MCF 10A (cell line): ENCODE measurements at regions of chr2 and their contacts with region 1.

Region 1: DNA sequence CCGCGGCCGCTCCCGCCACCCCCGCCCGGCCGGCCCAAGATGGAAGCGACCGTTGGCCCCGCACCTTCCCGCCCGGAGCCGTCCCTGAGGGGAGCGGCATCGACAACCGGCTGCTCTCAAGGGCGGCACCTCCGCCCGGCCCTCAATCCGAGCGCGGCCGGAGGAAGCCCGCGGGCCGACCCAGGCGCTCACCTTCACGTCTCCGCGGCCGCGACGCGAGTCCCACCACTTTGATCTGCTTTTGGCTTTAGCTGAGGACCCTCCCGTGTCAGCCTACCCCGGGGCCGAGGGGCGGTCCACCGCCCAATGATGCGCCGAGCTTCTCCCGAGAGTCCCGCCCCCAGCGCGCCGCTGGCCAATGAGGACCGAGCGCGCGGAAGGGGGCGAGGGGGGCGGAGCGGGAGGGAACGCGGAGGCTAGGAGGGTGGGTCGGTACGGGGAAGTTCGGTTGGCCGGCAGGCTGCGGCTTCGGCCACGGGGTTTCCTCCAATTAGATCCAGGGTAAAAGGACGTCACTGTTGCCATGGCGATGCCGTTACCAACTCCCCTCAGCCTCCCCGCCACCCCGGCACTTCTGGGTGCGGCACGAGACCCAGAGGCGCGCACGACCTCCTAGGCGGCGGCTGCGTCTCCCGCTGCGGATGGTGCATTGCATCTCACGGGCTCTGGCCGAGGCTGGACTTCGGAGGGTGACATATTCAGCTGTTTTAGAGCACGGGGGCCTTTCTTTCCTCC is at the start of gene YWHAQ:
- DNase-seq: peak; percentile 97
- H3K4me3 Mint-ChIP-seq: peak within 1 kb of the TSS; percentile 97
- H3K27ac Mint-ChIP-seq: peak within 1 kb of the TSS; percentile 85
- H3K4me1 Mint-ChIP-seq: peaks cover 24% of the 10 kb centered on the region
- H3K27me3 Mint-ChIP-seq: no peaks in the 10 kb centered on the region
- CTCF ChIP-seq: no peak
- total RNA-seq, gene YWHAQ: 239 TPM in 2 replicates

Region 2: DNA sequence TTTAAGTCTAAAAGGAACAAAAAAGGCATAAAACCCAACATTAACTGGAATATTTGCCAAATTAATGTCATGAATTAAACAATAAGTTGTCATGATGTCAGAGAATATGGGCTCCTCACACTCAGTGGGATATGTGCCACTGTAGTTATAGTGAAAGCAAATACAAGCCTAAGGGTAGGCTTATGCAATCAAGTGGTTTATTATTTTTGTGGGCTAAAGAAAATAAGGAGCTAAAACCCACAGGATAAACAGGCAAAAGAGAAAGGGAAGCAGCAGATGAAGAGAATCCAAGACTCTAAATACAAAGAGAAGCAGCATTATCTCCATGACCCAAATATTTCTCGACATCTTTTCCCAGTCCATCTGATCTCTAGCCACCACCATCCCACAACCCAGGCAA is 17.6 kb before region 1 on chr2:
- CTCF ChIA-PET with region 1: interaction called, 3 read pairs
- POLR2A ChIA-PET with region 1: interaction called, 52 read pairs
- intact Hi-C with region 1: no loop called
- DNase-seq: peak; percentile 81
- H3K4me3 Mint-ChIP-seq: no peak overlapping the region
- H3K27ac Mint-ChIP-seq: peak overlapping the region; percentile 40
- H3K4me1 Mint-ChIP-seq: peaks cover 41% of the 10 kb centered on the region
- H3K27me3 Mint-ChIP-seq: no peaks in the 10 kb centered on the region
- CTCF ChIP-seq: no peak

Region 3: GRCh38 chr2:9656270-9656766 is 25.4 kb after region 1 on chr2:
- CTCF ChIA-PET with region 1: interaction called, 4 read pairs
- POLR2A ChIA-PET with region 1: interaction called, 32 read pairs
- intact Hi-C with region 1: no loop called
- DNase-seq: peak; percentile 92
- H3K4me3 Mint-ChIP-seq: no peak overlapping the region
- H3K27ac Mint-ChIP-seq: peak overlapping the region; percentile 25
- H3K4me1 Mint-ChIP-seq: peaks cover 43% of the 10 kb centered on the region
- H3K27me3 Mint-ChIP-seq: peaks cover 13% of the 10 kb centered on the region
- CTCF ChIP-seq: no peak

Region 4: GRCh38 chr2:9703085-9703641 is 72.2 kb after region 1 on chr2:
- CTCF ChIA-PET with region 1: interaction called, 4 read pairs
- POLR2A ChIA-PET with region 1: interaction called, 9 read pairs
- intact Hi-C with region 1: loop called (anchors 1 kb)
- DNase-seq: peak; percentile 97
- H3K4me3 Mint-ChIP-seq: no peak overlapping the region
- H3K27ac Mint-ChIP-seq: peak overlapping the region; percentile 49
- H3K4me1 Mint-ChIP-seq: peaks cover 25% of the 10 kb centered on the region
- H3K27me3 Mint-ChIP-seq: no peaks in the 10 kb centered on the region
- CTCF ChIP-seq: no peak